ENCODE measurements at regions of chr3 and their contacts with region 1.

Region 1: DNA sequence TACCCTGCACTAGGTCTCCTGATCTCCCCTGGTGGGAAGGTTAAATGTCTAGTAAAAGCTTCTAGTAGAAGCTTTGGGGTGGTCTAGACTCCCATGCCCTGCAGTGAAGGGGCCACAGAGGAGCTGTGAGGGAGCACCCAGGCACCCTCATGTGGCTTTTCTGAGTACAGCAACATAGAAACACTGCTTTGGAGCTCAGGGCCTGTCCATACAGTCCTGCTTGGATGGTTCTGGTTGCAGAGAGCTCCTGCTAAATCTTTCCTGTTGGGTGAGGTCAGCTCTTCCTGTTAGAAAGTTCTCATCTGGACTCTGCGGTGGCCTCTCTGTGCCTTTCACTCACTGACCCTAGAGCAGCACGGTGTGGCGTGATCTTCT is 47.8 kb downstream of the GPD1L start:
- DNase-seq: no peak
- H3K4me3 ChIP-seq: no peak overlapping the region
- H3K4me3 Mint-ChIP-seq: no peak overlapping the region
- H3K27ac ChIP-seq: no peak overlapping the region
- H3K27ac Mint-ChIP-seq: peak overlapping the region in 3 of 8 donors; percentile 3 to 37 (median 26)
- H3K4me1 ChIP-seq: no peaks in the 10 kb centered on the region
- H3K4me1 Mint-ChIP-seq: no peaks in the 10 kb centered on the region
- H3K27me3 ChIP-seq: no peaks in the 10 kb centered on the region
- H3K27me3 Mint-ChIP-seq: no peaks in the 10 kb centered on the region

Region 2: DNA sequence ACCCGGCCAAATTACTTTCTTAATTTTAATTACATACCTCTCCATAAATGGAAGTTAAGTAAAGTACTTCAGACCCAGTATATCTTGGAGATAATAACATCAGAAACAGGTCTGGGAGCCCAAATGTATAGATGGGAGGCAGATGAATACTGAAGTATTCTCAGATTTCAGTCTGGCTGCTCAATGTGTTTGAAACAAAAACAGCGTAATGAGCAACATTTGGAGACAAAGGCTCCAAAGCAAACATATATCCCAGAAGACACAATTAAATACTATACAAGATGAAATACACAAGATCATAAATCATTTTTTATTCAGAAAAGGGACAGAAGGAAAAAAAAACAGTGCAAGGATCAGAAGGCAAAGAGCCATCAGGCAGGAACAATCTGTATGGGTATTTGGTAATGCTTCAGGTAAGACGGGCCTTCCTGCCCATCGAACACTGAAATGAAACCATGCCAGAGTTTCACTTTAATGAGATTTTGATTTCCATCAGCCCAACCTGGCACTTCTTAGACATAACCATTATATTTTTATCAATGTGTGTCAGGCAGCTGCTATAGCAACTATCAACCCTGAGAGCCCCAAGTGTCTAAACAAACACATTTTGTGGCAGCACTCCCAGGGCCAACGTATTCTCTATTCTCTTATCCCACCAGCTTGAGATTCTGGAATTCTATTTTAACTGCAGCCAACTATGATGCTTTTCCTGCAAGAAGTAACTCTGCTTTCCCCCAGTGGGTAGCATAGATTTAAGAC is 410.7 kb before region 1 on chr3:
- CTCF ChIA-PET with region 1: no interaction called
- POLR2A ChIA-PET with region 1: no interaction called
- DNase-seq: no peak
- H3K4me3 ChIP-seq: no peak overlapping the region
- H3K4me3 Mint-ChIP-seq: no peak overlapping the region
- H3K27ac ChIP-seq: no peak overlapping the region
- H3K27ac Mint-ChIP-seq: no peak overlapping the region
- H3K4me1 ChIP-seq: no peaks in the 10 kb centered on the region
- H3K4me1 Mint-ChIP-seq: no peaks in the 10 kb centered on the region
- H3K27me3 ChIP-seq: no peaks in the 10 kb centered on the region
- H3K27me3 Mint-ChIP-seq: peaks cover 0 to 3% of the 10 kb centered on the region in 2 donors

Region 3: GRCh38 chr3:32018757-32019564 is 135.2 kb before region 1 on chr3:
- CTCF ChIA-PET with region 1: interaction called, 16 read pairs
- POLR2A ChIA-PET with region 1: no interaction called
- DNase-seq: peak in 2 of 5 donors; percentile 22 to 36
- H3K4me3 ChIP-seq: no peak overlapping the region
- H3K4me3 Mint-ChIP-seq: no peak overlapping the region
- H3K27ac ChIP-seq: no peak overlapping the region
- H3K27ac Mint-ChIP-seq: no peak overlapping the region
- H3K4me1 ChIP-seq: no peaks in the 10 kb centered on the region
- H3K4me1 Mint-ChIP-seq: no peaks in the 10 kb centered on the region
- H3K27me3 ChIP-seq: no peaks in the 10 kb centered on the region
- H3K27me3 Mint-ChIP-seq: peaks cover 0 to 4% of the 10 kb centered on the region in 2 donors

Region 4: GRCh38 chr3:32184187-32184730 is 30.1 kb after region 1 on chr3:
- CTCF ChIA-PET with region 1: no interaction called
- POLR2A ChIA-PET with region 1: no interaction called
- DNase-seq: no peak
- H3K4me3 ChIP-seq: no peak overlapping the region
- H3K4me3 Mint-ChIP-seq: no peak overlapping the region
- H3K27ac ChIP-seq: no peak overlapping the region
- H3K27ac Mint-ChIP-seq: no peak overlapping the region
- H3K4me1 ChIP-seq: no peaks in the 10 kb centered on the region
- H3K4me1 Mint-ChIP-seq: no peaks in the 10 kb centered on the region
- H3K27me3 ChIP-seq: no peaks in the 10 kb centered on the region
- H3K27me3 Mint-ChIP-seq: peaks cover 10 to 57% of the 10 kb centered on the region in 2 donors